ENCODE measurements at regions of chr15 and their contacts with region 1.

Region 1: GRCh38 chr15:38624244-38625205 is 59.9 kb upstream of the RASGRP1 start:
- DNase-seq: peak in 1 of 3 donors; percentile 56
- ATAC-seq: no peak
- H3K4me3 ChIP-seq: no peak overlapping the region
- H3K27ac ChIP-seq: no peak overlapping the region
- H3K4me1 ChIP-seq: no peaks in the 10 kb centered on the region
- H3K27me3 ChIP-seq: no peaks in the 10 kb centered on the region

Region 2: GRCh38 chr15:38474155-38474757 is 150.3 kb before region 1 on chr15:
- intact Hi-C with region 1: loop called in 1 of 4 experiments (anchors 10 kb)
- DNase-seq: no peak
- ATAC-seq: peak; percentile 81 to 86
- H3K4me3 ChIP-seq: no peak overlapping the region
- H3K27ac ChIP-seq: no peak overlapping the region
- H3K4me1 ChIP-seq: no peaks in the 10 kb centered on the region
- H3K27me3 ChIP-seq: no peaks in the 10 kb centered on the region

Region 3: DNA sequence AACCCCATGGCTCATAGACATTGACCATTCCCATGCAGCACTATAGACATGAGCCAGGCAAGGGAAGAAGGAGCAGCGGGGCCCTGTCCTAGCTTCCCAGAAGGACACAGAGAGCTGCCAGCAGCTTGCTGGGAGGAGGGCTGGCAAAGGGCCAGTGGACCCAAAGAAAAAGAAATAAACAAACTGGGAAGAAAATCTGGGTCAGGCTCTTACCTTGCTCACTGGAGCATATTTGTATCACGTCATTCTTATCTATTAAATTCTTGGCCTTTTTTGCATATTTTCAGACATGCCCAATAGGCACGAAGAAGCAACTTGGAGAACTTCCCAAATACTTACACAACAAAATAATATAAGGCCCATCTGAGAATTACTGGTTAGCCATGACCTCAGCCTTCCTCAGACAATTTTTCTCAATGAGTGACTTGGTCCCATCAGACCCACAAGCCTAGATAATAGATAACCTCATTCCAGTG is 88.3 kb before region 1 on chr15:
- intact Hi-C with region 1: no loop called
- DNase-seq: peak; percentile 72 to 84 (median 80)
- ATAC-seq: peak; percentile 83 to 84
- H3K4me3 ChIP-seq: no peak overlapping the region
- H3K27ac ChIP-seq: no peak overlapping the region
- H3K4me1 ChIP-seq: peaks cover 1% of the 10 kb centered on the region
- H3K27me3 ChIP-seq: no peaks in the 10 kb centered on the region

Region 4: DNA sequence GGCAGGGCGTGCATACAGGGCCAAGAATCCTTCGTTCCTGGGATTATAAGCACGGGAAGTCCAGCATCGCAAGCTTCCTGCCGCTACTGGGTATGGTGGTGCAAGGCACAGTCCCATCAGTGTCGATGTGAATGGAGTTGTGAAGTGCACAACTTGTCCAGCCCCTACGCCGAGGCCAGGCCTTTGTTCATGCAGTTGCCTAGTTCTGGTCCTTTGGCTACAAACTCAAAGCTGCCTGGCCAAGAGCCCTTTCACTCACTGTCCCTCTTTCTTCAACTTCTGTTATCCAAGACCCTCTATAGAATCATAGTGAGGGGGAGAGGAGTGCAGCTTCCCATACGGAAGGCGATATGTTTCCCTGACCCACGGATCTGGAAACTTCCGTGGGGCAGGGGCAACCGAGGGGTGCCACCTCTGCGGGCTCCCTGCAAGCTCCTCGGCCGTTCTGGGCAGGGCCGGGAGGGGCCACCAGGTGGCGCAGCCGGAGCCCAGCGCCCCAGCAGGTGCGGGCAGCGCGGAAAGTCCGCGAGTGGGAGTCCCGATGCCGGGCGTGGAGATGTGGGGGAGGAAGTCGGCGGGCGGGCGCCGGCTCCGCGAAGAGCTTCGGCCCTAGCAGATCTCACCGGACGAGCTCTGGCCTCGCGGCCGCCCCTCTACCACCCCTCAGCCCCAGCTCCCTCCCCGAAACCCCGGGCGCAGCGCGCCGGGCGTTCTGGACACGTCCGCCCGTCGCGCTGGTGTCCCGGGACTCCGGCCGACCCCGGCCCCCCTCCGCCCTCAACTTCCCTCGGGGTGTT is 60.6 kb before region 1 on chr15:
- intact Hi-C with region 1: loop called (anchors 2 to 10 kb)
- DNase-seq: peak; percentile 65 to 88 (median 85)
- ATAC-seq: peak; percentile 90 to 92
- H3K4me3 ChIP-seq: peak overlapping the region; percentile 55
- H3K27ac ChIP-seq: no peak overlapping the region
- H3K4me1 ChIP-seq: no peaks in the 10 kb centered on the region
- H3K27me3 ChIP-seq: no peaks in the 10 kb centered on the region

Region 5: DNA sequence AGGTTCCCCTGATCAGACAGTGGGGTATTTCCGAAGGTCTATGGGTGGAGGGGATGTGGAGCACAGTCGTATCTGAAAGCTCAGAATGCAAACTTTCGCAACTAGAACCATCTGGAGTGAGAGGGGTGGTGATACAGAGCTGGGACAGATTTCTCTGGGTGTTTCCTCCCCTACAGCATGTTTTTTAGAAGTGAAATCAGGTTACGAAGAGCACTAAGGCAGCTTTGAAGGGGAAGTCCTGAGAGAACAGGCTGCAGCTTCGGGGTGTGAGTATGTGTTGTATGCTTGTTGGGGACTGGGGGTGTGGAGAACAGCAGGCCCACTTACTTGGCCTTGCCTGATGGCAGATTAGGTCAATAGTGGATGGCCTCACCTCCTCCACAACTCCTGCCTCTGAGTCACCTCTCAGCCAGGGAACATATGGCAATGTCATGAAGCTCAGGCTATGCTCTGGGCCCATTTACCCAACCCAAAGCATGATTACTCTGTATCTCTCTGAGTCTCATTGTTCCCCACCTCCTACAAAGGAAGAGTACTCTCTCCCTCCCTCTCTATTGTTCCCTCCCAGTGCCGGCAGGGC is 47.2 kb after region 1 on chr15:
- intact Hi-C with region 1: no loop called
- DNase-seq: no peak
- ATAC-seq: no peak
- H3K4me3 ChIP-seq: no peak overlapping the region
- H3K27ac ChIP-seq: no peak overlapping the region
- H3K4me1 ChIP-seq: no peaks in the 10 kb centered on the region
- H3K27me3 ChIP-seq: no peaks in the 10 kb centered on the region

Region 6: DNA sequence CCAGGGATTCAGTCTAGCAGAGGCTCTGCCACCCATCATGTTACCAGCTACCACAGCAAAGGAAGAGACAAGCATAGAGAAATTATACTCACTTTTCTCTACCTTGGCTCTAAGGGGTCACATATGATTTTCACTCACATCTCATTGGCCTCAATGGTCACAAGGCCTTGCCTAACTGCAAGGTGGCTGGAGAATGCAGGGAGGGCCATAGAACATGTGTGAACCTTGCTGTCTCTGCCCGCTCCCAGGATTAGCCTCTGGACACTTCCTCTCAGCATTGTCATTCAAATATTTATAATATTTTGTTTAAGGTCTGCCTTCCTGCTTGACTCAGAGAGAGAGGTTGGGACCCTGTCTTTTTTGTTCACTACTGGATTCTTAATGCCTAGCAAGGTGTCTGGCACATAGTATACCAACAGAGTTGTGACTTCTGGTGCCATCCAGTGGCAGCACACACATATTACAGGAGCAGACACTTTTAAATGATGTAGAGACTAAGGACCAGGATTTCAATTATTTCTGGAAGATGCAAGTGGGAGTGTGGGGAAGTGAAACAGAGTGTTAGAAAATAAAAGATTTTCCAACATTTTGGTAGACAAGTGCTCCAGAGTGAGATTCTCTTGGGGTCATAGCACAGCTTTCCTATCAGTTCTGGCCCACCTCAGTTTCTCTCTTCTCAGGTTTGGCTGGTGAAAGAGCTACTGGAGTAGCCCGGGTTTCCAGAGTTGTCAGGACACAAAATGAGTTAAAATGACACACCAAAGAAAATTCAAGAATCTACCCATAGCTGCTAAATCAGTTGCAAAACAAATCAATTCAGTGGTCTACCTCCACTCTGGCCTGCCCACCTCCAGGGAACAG is 59.1 kb after region 1 on chr15:
- intact Hi-C with region 1: no loop called
- DNase-seq: peak in 2 of 3 donors; percentile 51 to 57
- ATAC-seq: peak; percentile 69 to 75
- H3K4me3 ChIP-seq: no peak overlapping the region
- H3K27ac ChIP-seq: no peak overlapping the region
- H3K4me1 ChIP-seq: no peaks in the 10 kb centered on the region
- H3K27me3 ChIP-seq: no peaks in the 10 kb centered on the region